Activated T-helper 2 cell treated with anti-CD3 and anti-CD28 coated beads, Interferon-gamma antibody, Interleukin-2, Interleukin-4, amounts not matched to agents 10 μg/mL and 5 μg/mL and 100 μg/mL, durations not matched to agents 14 hours and 24 hours and 36 hours (primary cell): ENCODE measurements at regions of chr10 and their contacts with region 1.

Region 1: DNA sequence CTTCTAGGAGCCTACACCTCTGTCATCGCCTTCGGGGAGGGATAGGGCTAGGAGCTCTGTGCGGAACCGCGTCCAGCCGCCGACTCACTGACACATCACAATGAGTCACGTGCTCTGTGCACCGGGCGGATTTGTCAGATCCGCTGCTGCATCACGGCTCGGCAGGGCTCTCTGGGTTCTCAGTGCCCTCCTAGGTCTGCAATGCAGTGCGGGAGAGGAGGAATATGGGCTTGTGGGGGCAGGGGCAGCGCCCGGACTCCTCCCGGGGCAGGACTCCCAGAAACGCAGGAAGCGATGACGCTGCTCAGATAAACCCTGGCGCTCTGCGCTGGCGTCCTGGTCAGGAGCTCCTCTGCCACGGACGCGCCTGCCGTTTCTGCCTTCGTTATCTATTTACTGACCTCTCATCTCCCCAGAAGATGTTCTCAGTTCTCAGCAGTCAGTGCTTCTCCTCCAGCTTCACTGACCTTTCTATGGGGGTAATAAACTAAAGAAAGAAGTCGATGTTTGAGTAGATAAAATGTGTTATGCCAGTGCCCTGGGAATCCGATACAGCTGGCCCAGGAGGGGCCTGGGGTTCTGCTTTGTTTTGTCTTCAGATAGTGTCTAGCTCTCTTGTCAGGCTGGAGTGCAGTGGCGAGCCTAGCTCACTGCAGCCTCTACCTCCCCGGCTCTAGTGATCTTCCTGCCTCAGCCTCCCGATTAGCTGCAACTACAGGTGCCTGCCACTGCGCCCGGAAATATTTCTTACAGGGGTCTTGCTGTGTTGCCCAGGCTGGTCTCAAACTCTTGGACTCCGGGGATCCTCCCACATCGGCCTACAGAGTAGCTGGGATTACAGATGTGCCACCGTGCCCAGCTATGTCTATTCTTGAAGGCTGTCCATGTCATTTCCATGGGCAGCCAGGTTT is 22.8 kb upstream of the ITGB1 start:
- DNase-seq: peak; percentile 77
- H3K4me3 Mint-ChIP-seq: peak overlapping the region; percentile 85
- H3K27ac Mint-ChIP-seq: peak overlapping the region; percentile 88
- H3K4me1 Mint-ChIP-seq: peaks cover 28% of the 10 kb centered on the region
- H3K27me3 Mint-ChIP-seq: peaks cover 3% of the 10 kb centered on the region

Region 2: GRCh38 chr10:32929632-32930031 is 51.2 kb before region 1 on chr10:
- intact Hi-C with region 1: loop called (anchors 10 kb)
- DNase-seq: no peak
- H3K4me3 Mint-ChIP-seq: no peak overlapping the region
- H3K27ac Mint-ChIP-seq: no peak overlapping the region
- H3K4me1 Mint-ChIP-seq: peaks cover 8% of the 10 kb centered on the region
- H3K27me3 Mint-ChIP-seq: no peaks in the 10 kb centered on the region